ENCODE measurements at regions of chr17 and their contacts with region 1.

Region 1: GRCh38 chr17:47949136-47949759 is 7.9 kb downstream of the PNPO start:
- DNase-seq: peak; percentile 98
- ATAC-seq: peak; percentile 88
- H3K4me3 Mint-ChIP-seq: peak overlapping the region; percentile 47
- H3K27ac Mint-ChIP-seq: peak overlapping the region; percentile 83
- H3K4me1 Mint-ChIP-seq: peaks cover 16% of the 10 kb centered on the region
- H3K27me3 Mint-ChIP-seq: no peaks in the 10 kb centered on the region
- CTCF ChIP-seq: peak; percentile 72

Region 2: GRCh38 chr17:47889734-47890529 is 59.3 kb before region 1 on chr17:
- CTCF ChIA-PET with region 1: interaction called, 27 read pairs
- POLR2A ChIA-PET with region 1: no interaction called
- DNase-seq: peak; percentile 96
- ATAC-seq: peak; percentile 96
- H3K4me3 Mint-ChIP-seq: no peak overlapping the region
- H3K27ac Mint-ChIP-seq: no peak overlapping the region
- H3K4me1 Mint-ChIP-seq: peaks cover 27% of the 10 kb centered on the region
- H3K27me3 Mint-ChIP-seq: no peaks in the 10 kb centered on the region; the same call in 1 of the 2 replicates
- CTCF ChIP-seq: peak; percentile 94

Region 3: GRCh38 chr17:47929218-47930000 is 19.8 kb before region 1 on chr17:
- CTCF ChIA-PET with region 1: interaction called, 13 read pairs
- POLR2A ChIA-PET with region 1: no interaction called
- DNase-seq: no peak
- ATAC-seq: no peak
- H3K4me3 Mint-ChIP-seq: no peak overlapping the region
- H3K27ac Mint-ChIP-seq: no peak overlapping the region
- H3K4me1 Mint-ChIP-seq: no peaks in the 10 kb centered on the region
- H3K27me3 Mint-ChIP-seq: no peaks in the 10 kb centered on the region
- CTCF ChIP-seq: no peak

Region 4: GRCh38 chr17:47987240-47987835 is 38.1 kb after region 1 on chr17:
- CTCF ChIA-PET with region 1: interaction called, 12 read pairs
- POLR2A ChIA-PET with region 1: no interaction called
- DNase-seq: peak; percentile 40
- ATAC-seq: peak; percentile 38
- H3K4me3 Mint-ChIP-seq: no peak overlapping the region
- H3K27ac Mint-ChIP-seq: no peak overlapping the region
- H3K4me1 Mint-ChIP-seq: peaks cover 42% of the 10 kb centered on the region
- H3K27me3 Mint-ChIP-seq: no peaks in the 10 kb centered on the region
- CTCF ChIP-seq: no peak

Region 5: DNA sequence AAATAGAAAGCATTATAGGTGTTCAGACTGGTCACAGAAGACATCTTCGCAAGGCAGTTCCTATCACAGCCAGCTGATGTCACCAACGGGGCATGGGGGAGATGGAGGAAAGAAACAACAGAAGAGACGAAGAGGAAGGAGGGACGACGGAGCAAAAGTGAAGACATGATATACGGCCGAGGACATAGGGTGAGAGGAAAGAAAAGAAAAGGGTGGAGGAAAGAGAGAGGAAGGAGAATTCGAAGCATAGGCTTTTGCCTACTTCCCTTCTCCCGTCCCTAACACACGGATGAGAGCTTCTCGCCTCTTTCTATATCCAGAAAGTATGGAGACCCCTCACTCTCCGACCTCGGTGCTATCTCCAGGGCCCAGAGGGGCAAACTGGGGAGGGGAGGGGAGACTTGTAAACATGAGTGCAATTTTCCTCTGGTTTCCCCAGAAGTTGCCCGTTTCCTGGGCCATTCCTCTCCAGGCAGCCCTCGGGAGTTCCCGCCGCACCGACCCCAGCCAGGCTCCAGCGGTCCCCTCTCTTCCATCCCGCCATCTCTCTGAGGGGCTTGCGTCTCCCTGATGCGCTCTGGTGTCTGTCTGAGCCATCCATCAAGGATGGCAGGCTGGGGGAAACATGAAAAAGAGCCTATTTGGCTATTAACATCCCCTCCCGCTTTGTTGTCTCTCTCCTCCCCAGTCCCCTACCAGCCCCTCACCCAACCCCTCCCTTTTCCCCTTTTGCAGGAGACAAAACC is 62.3 kb after region 1 on chr17:
- CTCF ChIA-PET with region 1: interaction called, 34 read pairs
- POLR2A ChIA-PET with region 1: no interaction called
- DNase-seq: peak; percentile 59
- ATAC-seq: peak; percentile 79
- H3K4me3 Mint-ChIP-seq: peak overlapping the region; percentile 88
- H3K27ac Mint-ChIP-seq: no peak overlapping the region
- H3K4me1 Mint-ChIP-seq: peaks cover 23% of the 10 kb centered on the region
- H3K27me3 Mint-ChIP-seq: peaks cover 26% of the 10 kb centered on the region
- CTCF ChIP-seq: no peak

Measured in WTC11 (cell line).